ENCODE measurements at regions of chr14 and their contacts with region 1.

Region 1: GRCh38 chr14:102781063-102781462 is 3.8 kb downstream of the TRAF3 start:
- DNase-seq: no peak
- ATAC-seq: no peak
- H3K4me3 ChIP-seq: no peak overlapping the region
- H3K4me3 Mint-ChIP-seq: peak overlapping the region; percentile 45
- H3K27ac ChIP-seq: no peak overlapping the region
- H3K27ac Mint-ChIP-seq: peak overlapping the region; percentile 58
- H3K4me1 ChIP-seq: peaks cover 66% of the 10 kb centered on the region
- H3K4me1 Mint-ChIP-seq: peaks cover 71% of the 10 kb centered on the region
- H3K27me3 ChIP-seq: no peaks in the 10 kb centered on the region
- H3K27me3 Mint-ChIP-seq: no peaks in the 10 kb centered on the region
- CTCF ChIP-seq: no peak

Region 2: GRCh38 chr14:102793531-102794328 is 12.7 kb after region 1 on chr14:
- CTCF ChIA-PET with region 1: no interaction called
- POLR2A ChIA-PET with region 1: no interaction called
- intact Hi-C with region 1: loop called in 1 of 2 experiments (anchors 1 kb)
- DNase-seq: no peak
- ATAC-seq: no peak
- H3K4me3 ChIP-seq: no peak overlapping the region
- H3K4me3 Mint-ChIP-seq: peak overlapping the region; percentile 46
- H3K27ac ChIP-seq: no peak overlapping the region
- H3K27ac Mint-ChIP-seq: no peak overlapping the region
- H3K4me1 ChIP-seq: peaks cover 44% of the 10 kb centered on the region
- H3K4me1 Mint-ChIP-seq: peaks cover 71% of the 10 kb centered on the region
- H3K27me3 ChIP-seq: no peaks in the 10 kb centered on the region
- H3K27me3 Mint-ChIP-seq: no peaks in the 10 kb centered on the region
- CTCF ChIP-seq: no peak